H1 (cell line): ENCODE measurements at regions of chr2 and their contacts with region 1.

Region 1: GRCh38 chr2:173370198-173370597 is 15.5 kb downstream of the CDCA7 start:
- DNase-seq: no peak
- H3K4me3 ChIP-seq: no peak overlapping the region
- H3K27ac ChIP-seq: no peak overlapping the region
- H3K4me1 ChIP-seq: peaks cover 0 to 3% (median 0%) of the 10 kb centered on the region in 4 experiments; a peak in 1 of 7 replicates
- H3K27me3 ChIP-seq: no peaks in the 10 kb centered on the region
- CTCF ChIP-seq: no peak
- EP300 ChIP-seq: no peak
- POLR2A ChIP-seq: no peak
- RAD21 ChIP-seq: no peak

Region 2: GRCh38 chr2:173136599-173136998 is 233.6 kb before region 1 on chr2:
- CTCF ChIA-PET with region 1: no interaction called
- POLR2A ChIA-PET with region 1: no interaction called
- DNase-seq: no peak
- H3K4me3 ChIP-seq: no peak overlapping the region
- H3K27ac ChIP-seq: no peak overlapping the region
- H3K4me1 ChIP-seq: peaks cover 0 to 3% (median 0%) of the 10 kb centered on the region in 4 experiments; a peak in 2 of 7 replicates
- H3K27me3 ChIP-seq: no peaks in the 10 kb centered on the region
- CTCF ChIP-seq: no peak
- EP300 ChIP-seq: no peak
- POLR2A ChIP-seq: no peak
- RAD21 ChIP-seq: no peak

Region 3: DNA sequence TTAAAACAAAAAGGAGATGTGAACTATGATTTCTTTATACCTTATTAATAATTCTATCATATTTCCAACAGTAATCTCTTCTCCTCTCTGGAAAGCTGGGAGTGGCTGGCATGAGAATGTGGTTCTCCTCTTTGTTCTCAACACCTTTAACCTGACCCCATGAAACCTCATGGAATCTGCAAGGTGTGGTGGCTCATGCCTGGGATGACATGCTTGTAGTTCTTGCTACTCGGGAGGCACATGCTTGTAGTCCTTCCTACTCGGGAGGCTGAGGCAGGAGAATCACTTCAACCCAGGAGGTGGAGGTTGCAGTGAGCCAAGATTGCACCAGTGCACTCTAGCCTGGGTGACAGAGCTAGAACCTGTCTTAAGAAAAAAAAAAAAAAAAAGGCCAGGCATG is 26.3 kb before region 1 on chr2:
- CTCF ChIA-PET with region 1: no interaction called
- POLR2A ChIA-PET with region 1: no interaction called
- DNase-seq: no peak
- H3K4me3 ChIP-seq: no peak overlapping the region
- H3K27ac ChIP-seq: no peak overlapping the region
- H3K4me1 ChIP-seq: peaks cover 3 to 4% (median 3%) of the 10 kb centered on the region in 4 experiments; a peak in 3 of 7 replicates
- H3K27me3 ChIP-seq: no peaks in the 10 kb centered on the region
- CTCF ChIP-seq: no peak
- EP300 ChIP-seq: no peak
- POLR2A ChIP-seq: no peak
- RAD21 ChIP-seq: no peak

Region 4: GRCh38 chr2:173355132-173355865 is 14.9 kb before region 1 on chr2:
- CTCF ChIA-PET with region 1: interaction called, 3 read pairs
- POLR2A ChIA-PET with region 1: interaction called, 17 read pairs
- DNase-seq: peak; percentile 33 to 76
- H3K4me3 ChIP-seq: peak overlapping the region; percentile 78 to 86 (median 83)
- H3K27ac ChIP-seq: peak overlapping the region; percentile 99
- H3K4me1 ChIP-seq: peaks cover 4 to 16% (median 9%) of the 10 kb centered on the region in 4 experiments; a peak in 4 of 7 replicates
- H3K27me3 ChIP-seq: no peaks in the 10 kb centered on the region
- CTCF ChIP-seq: no peak
- EP300 ChIP-seq: no peak
- POLR2A ChIP-seq: peak; percentile 44 to 78
- RAD21 ChIP-seq: no peak

Region 5: GRCh38 chr2:173410579-173410978 is 40.4 kb after region 1 on chr2:
- CTCF ChIA-PET with region 1: no interaction called
- POLR2A ChIA-PET with region 1: no interaction called
- DNase-seq: no peak
- H3K4me3 ChIP-seq: no peak overlapping the region
- H3K27ac ChIP-seq: no peak overlapping the region
- H3K4me1 ChIP-seq: no peaks in the 10 kb centered on the region
- H3K27me3 ChIP-seq: no peaks in the 10 kb centered on the region; a peak in 1 of 7 replicates
- CTCF ChIP-seq: no peak
- EP300 ChIP-seq: no peak
- POLR2A ChIP-seq: no peak
- RAD21 ChIP-seq: no peak